ENCODE measurements at regions of chr11 and their contacts with region 1.

Region 1: GRCh38 chr11:2400069-2400760 is at the start of gene TSSC4:
- DNase-seq: peak; percentile 99
- H3K4me3 Mint-ChIP-seq: peak within 1 kb of the TSS; percentile 84
- H3K27ac Mint-ChIP-seq: peak within 1 kb of the TSS; percentile 87
- H3K4me1 Mint-ChIP-seq: peaks cover 16% of the 10 kb centered on the region
- H3K27me3 Mint-ChIP-seq: no peaks in the 10 kb centered on the region
- total RNA-seq, gene TSSC4: 41.9 to 42.0 TPM

Region 2: GRCh38 chr11:2074266-2074825 is 325.9 kb before region 1 on chr11:
- CTCF ChIA-PET with region 1: no interaction called
- intact Hi-C with region 1: no loop called
- DNase-seq: peak; percentile 20
- H3K4me3 Mint-ChIP-seq: no peak overlapping the region
- H3K27ac Mint-ChIP-seq: no peak overlapping the region
- H3K4me1 Mint-ChIP-seq: peaks cover 15% of the 10 kb centered on the region
- H3K27me3 Mint-ChIP-seq: peaks cover 7% of the 10 kb centered on the region

Region 3: DNA sequence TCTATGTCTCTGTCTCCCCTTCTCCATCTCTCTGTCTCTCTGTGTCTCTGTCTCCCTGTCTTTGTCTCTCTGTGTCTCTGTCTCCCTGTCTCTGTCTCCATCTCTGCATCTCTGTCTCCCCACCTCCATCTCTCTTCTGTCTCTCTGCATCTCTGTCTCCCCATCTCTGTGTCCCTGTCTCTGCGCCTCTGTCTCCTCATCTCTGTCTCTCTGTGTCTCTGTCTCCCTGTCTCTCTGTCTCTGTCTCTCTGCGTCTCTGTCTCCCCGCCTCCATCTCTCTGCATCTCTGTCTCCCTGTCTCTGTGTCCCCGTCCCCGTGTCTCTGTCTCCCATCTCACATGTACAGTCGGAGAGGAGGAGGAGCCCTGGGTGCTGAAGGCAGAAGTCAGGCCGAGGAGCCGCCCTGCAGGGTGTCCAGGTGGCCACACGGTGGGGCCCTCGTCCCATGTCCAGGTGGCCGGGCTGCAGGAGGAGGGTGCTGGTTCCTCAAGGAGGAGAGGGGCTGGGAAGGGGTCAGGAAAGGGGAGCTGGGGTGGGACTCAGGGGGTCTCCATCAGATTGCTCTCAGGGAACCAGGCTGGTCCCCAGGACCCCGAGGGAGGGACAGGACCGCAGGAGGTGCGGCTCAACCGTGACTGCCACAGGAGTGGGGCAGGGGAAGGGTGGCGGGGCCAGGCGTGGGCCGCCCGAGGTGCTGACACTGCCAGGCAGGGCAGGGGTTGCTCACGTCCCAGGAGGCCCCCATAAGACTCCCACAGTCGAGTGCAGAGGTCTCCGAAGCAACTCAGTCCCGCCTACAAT is 203.0 kb before region 1 on chr11:
- CTCF ChIA-PET with region 1: no interaction called
- intact Hi-C with region 1: loop called (anchors 5 kb)
- DNase-seq: peak; percentile 82
- H3K4me3 Mint-ChIP-seq: no peak overlapping the region
- H3K27ac Mint-ChIP-seq: no peak overlapping the region
- H3K4me1 Mint-ChIP-seq: no peaks in the 10 kb centered on the region
- H3K27me3 Mint-ChIP-seq: no peaks in the 10 kb centered on the region

Region 4: GRCh38 chr11:2305140-2305840 is 94.9 kb before region 1 on chr11:
- CTCF ChIA-PET with region 1: interaction called, 38 read pairs
- intact Hi-C with region 1: loop called (anchors 1 kb)
- DNase-seq: peak; percentile 91
- H3K4me3 Mint-ChIP-seq: no peak overlapping the region
- H3K27ac Mint-ChIP-seq: no peak overlapping the region
- H3K4me1 Mint-ChIP-seq: peaks cover 44% of the 10 kb centered on the region
- H3K27me3 Mint-ChIP-seq: no peaks in the 10 kb centered on the region

Region 5: DNA sequence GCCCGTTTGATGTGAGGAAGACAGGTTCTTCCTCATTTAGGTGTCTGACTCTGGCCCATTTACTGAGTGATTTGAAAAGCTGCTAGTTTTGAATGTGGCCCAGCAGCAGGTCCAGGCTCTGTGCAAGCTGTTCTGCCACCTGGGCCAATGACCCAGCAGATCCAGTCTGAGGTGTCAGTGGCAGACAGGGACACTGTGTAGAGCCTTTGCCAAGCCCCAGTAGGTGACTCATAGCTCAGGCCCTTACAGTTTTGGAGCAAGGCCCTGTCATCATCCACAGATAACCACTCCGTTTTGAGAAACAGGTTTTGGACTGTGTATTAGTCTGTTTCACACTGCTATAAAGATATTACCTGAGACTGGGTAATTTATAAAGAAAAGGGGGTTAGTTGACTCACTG is 74.5 kb before region 1 on chr11:
- CTCF ChIA-PET with region 1: no interaction called
- intact Hi-C with region 1: no loop called
- DNase-seq: no peak
- H3K4me3 Mint-ChIP-seq: no peak overlapping the region
- H3K27ac Mint-ChIP-seq: no peak overlapping the region
- H3K4me1 Mint-ChIP-seq: no peaks in the 10 kb centered on the region
- H3K27me3 Mint-ChIP-seq: peaks cover 21% of the 10 kb centered on the region

Region 6: DNA sequence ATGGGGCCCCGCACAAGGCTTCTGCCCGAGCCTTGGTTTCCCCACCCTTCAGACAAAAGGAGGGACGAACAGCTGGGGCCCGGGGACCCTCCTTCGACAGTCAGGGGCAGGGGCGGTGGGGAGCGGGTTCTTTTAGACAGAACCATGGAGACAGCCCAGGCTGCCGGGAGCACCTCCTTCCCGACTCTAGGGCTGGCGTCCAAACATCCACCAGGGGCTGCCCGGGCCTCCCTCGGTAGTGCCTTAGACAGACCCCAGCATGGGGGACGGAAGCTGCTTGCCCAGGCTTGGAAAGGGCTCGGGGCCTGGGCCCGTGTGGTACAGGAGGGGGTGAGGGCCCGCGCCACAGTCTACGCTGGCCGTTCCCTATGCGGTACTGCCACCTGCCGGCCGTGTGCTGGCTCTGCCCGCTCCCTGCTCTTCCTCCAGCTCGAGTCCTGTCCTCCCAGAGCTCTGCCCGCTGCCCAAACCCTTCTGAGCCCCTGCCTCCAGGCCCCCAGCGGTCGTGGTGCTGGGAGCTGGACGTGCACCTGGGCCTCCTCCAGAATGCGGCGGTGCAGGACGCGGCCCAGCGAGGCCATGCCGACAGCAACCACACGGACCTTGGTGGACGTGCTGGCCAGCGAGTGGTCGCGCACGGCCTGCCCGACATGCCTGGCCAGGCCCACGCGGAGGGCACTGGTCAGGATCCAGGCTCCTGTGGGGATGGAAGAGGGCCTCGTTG is 20.4 kb after region 1 on chr11:
- CTCF ChIA-PET with region 1: interaction called, 20 read pairs
- intact Hi-C with region 1: loop called (anchors 1 kb)
- DNase-seq: peak; percentile 75
- H3K4me3 Mint-ChIP-seq: no peak overlapping the region
- H3K27ac Mint-ChIP-seq: no peak overlapping the region
- H3K4me1 Mint-ChIP-seq: peaks cover 2% of the 10 kb centered on the region
- H3K27me3 Mint-ChIP-seq: no peaks in the 10 kb centered on the region

Region 7: DNA sequence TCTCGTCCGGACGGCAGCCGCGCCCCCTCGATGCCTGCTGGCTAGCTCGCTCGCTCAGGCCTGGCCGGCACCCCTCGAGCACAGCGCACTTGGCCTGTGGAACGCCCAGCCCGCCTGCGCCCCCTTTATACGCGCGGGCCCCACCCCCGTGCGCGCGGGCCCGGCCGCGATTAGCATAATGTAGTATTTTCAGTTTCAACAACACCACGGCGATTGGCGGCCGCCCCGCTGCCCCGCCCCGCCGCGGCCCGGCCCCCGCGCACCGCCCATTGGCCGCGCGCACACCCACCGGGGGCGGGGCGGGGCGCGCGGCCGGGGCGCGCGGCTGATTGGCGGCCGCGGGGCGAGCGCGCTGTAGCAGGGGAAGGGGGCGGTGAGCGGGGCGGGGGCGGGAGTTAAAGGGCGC is 485.5 kb after region 1 on chr11 and contains the start of gene CDKN1C:
- CTCF ChIA-PET with region 1: no interaction called
- intact Hi-C with region 1: loop called (anchors 1 kb)
- DNase-seq: peak; percentile 76
- H3K4me3 Mint-ChIP-seq: peak within 1 kb of the TSS; percentile 71
- H3K27ac Mint-ChIP-seq: no peak within 1 kb of the TSS
- H3K4me1 Mint-ChIP-seq: no peaks in the 10 kb centered on the region
- H3K27me3 Mint-ChIP-seq: peaks cover 3% of the 10 kb centered on the region
- total RNA-seq, gene CDKN1C: 0.17 to 0.26 TPM

Measured in activated naive CD4-positive, alpha-beta T cell treated with anti-CD3 and anti-CD28 coated beads for 36 hours (primary cell).